Endothelial cell of umbilical vein (primary cell): ENCODE measurements at regions of chr5 and their contacts with region 1.

Region 1: GRCh38 chr5:83577036-83577636 is 105.6 kb downstream of the VCAN start:
- DNase-seq: peak; percentile 95
- H3K4me3 ChIP-seq: no peak overlapping the region
- H3K27ac ChIP-seq: peak overlapping the region; percentile 66
- H3K4me1 ChIP-seq: peaks cover 17% of the 10 kb centered on the region
- H3K27me3 ChIP-seq: no peaks in the 10 kb centered on the region
- CTCF ChIP-seq: no peak
- POLR2A ChIP-seq: peak; percentile 70

Region 2: GRCh38 chr5:83076742-83077661 is 500.1 kb before region 1 on chr5 and contains the starts of genes TMEM167A and XRCC4:
- CTCF ChIA-PET with region 1: no interaction called
- POLR2A ChIA-PET with region 1: no interaction called
- dilution Hi-C with region 1: no loop called
- intact Hi-C with region 1: loop called (anchors 2 kb)
- DNase-seq: peak; percentile 97
- H3K4me3 ChIP-seq: peak within 1 kb of the TSS; percentile 69 to 98 (median 93)
- H3K27ac ChIP-seq: peak within 1 kb of the TSS; percentile 85
- H3K4me1 ChIP-seq: peaks cover 14% of the 10 kb centered on the region
- H3K27me3 ChIP-seq: no peaks in the 10 kb centered on the region
- CTCF ChIP-seq: no peak
- POLR2A ChIP-seq: peak; percentile 77
- total RNA-seq, gene TMEM167A: 64.4 and 69.4 TPM in 2 replicates
- total RNA-seq, gene XRCC4: 7.6 and 7.7 TPM in 2 replicates

Region 3: DNA sequence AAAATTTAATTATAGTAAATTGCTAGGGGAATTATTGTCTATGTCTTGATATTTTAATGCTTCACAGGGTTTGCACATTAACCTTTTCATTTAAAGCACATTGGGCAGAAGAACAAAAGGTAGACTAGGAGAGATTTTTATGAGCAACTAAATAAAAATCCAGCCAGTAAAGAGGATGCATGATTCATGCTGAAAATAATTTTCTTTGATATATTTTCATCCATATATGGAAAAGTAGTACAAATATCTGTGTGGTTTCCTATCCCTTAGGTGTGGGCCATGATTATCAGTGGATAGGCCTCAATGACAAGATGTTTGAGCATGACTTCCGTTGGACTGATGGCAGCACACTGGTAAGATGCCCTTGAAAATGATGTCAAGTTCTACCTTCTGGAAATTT is 22.4 kb before region 1 on chr5:
- CTCF ChIA-PET with region 1: interaction called, 3 read pairs
- POLR2A ChIA-PET with region 1: no interaction called
- dilution Hi-C with region 1: no loop called
- intact Hi-C with region 1: loop called (anchors 2 kb)
- DNase-seq: no peak
- H3K4me3 ChIP-seq: no peak overlapping the region
- H3K27ac ChIP-seq: no peak overlapping the region
- H3K4me1 ChIP-seq: peaks cover 18% of the 10 kb centered on the region
- H3K27me3 ChIP-seq: peaks cover 0 to 3% of the 10 kb centered on the region in 2 experiments
- CTCF ChIP-seq: no peak
- POLR2A ChIP-seq: no peak

Region 4: GRCh38 chr5:83632874-83633273 is 55.7 kb after region 1 on chr5:
- CTCF ChIA-PET with region 1: no interaction called
- POLR2A ChIA-PET with region 1: no interaction called
- dilution Hi-C with region 1: no loop called
- intact Hi-C with region 1: loop called (anchors 2 kb)
- DNase-seq: peak; percentile 84
- H3K4me3 ChIP-seq: no peak overlapping the region
- H3K27ac ChIP-seq: peak overlapping the region; percentile 50
- H3K4me1 ChIP-seq: peaks cover 16% of the 10 kb centered on the region
- H3K27me3 ChIP-seq: no peaks in the 10 kb centered on the region
- CTCF ChIP-seq: no peak
- POLR2A ChIP-seq: no peak